BJ (cell line): ENCODE measurements at regions of chr20 and their contacts with region 1.

Region 1: DNA sequence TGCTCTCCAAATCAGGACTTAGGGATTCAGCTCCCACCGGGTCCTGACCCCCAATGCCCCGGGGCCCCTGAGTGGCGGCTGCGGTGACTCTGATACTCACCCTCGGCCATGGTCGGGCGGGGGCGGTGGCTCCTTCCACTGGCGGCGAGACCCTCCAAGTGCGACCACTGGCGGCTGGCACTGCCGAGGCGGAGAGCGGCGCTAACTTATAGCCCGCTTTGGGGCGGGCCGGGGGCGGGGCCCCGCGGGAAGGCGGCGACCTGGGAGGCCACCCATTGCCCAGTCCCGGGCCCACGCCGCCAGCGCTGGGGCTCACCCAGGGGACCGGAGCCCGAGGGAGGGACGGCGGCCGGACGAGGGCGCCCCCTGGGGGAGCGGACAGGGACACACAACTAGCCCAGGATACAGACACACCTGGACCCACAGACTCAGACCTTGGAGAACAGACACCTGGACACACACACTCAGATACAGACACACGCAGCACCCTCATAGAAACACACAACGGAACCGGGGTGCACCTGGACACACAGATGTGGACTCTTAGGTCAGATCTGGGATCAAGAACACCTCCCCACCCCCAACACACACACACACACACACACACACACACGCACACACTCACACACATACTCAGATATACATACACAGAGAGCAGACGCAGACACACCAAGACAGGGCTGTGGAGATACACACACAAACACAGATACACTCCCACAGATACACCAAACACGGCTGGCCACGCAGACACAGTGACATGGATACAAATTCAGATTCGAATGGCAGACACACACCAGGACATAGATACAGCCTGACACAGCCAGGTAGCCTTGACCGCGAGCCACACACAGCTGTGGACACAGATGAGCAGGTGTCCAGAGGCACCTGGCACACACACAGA is at the start of gene TGM2:
- DNase-seq: no peak
- H3K4me3 ChIP-seq: peak within 1 kb of the TSS; percentile 50
- H3K27me3 ChIP-seq: no peaks in the 10 kb centered on the region
- CTCF ChIP-seq: peak; percentile 77
- polyA plus RNA-seq, gene TGM2: 313 and 397 TPM in 2 replicates

Region 2: DNA sequence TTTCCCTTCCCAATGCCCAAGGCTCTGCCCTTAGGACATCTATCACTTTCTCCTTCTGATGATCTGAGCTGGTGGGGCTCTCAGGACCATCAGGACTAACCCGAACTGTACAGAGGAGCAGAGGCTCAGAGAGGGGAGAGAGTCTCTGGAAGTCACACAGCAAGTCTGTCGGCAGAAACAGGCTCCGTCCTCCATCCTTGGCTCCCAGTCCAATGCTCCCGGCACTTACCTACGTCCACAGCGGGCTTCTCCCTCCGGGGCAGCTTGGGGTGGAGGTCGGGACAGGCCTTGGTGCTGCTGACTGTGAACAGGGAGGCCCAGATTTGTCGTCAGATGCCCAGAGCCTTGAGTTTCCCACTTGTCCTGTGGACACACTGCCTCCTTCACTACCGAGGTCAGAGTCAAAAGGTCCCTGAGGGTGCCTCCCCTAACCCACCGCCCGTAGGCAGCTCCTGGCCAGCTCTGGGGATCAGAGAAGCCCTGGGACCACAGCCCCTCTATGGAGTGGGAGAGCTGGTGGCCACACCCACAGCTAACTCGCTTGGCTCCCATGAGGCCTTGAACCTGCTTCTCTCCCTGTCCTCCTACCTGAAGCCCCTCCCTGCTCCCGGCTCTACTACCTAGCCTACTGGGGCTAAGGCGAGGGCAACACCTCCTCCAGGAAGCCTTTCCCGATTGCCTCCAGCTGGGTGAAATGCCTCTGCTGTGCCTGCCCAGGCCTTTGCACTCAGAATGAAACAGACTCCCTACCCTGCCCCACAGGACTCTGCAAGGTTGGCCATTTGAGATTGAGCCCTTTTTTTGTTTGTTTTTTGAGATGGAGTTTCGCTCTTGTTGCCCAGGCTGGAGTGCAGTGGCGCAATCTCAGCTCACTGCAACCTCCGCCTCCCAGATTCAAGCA is 239.8 kb before region 1 on chr20:
- CTCF ChIA-PET with region 1: no interaction called
- POLR2A ChIA-PET with region 1: no interaction called
- DNase-seq: no peak
- H3K4me3 ChIP-seq: no peak overlapping the region
- H3K27me3 ChIP-seq: peaks cover 28% of the 10 kb centered on the region
- CTCF ChIP-seq: no peak

Region 3: GRCh38 chr20:38113401-38114325 is 51.7 kb before region 1 on chr20:
- CTCF ChIA-PET with region 1: interaction called, 23 read pairs
- POLR2A ChIA-PET with region 1: no interaction called
- DNase-seq: no peak
- H3K4me3 ChIP-seq: no peak overlapping the region
- H3K27me3 ChIP-seq: no peaks in the 10 kb centered on the region
- CTCF ChIP-seq: peak; percentile 34

Region 4: GRCh38 chr20:38152621-38153231 is 12.6 kb before region 1 on chr20:
- CTCF ChIA-PET with region 1: interaction called, 12 read pairs
- POLR2A ChIA-PET with region 1: no interaction called
- DNase-seq: no peak
- H3K4me3 ChIP-seq: no peak overlapping the region
- H3K27me3 ChIP-seq: no peaks in the 10 kb centered on the region
- CTCF ChIP-seq: no peak